ENCODE measurements at regions of chr2 and their contacts with region 1.

Region 1: GRCh38 chr2:202178342-202178958 is 59.9 kb downstream of the SUMO1 start:
- DNase-seq: peak; percentile 47 to 80 (median 59)
- H3K4me3 ChIP-seq: no peak overlapping the region
- H3K27ac ChIP-seq: no peak overlapping the region
- H3K4me1 ChIP-seq: no peaks in the 10 kb centered on the region
- H3K27me3 ChIP-seq: no peaks in the 10 kb centered on the region
- CTCF ChIP-seq: peak; percentile 69 to 87 (median 83)
- POLR2A ChIP-seq: no peak

Region 2: DNA sequence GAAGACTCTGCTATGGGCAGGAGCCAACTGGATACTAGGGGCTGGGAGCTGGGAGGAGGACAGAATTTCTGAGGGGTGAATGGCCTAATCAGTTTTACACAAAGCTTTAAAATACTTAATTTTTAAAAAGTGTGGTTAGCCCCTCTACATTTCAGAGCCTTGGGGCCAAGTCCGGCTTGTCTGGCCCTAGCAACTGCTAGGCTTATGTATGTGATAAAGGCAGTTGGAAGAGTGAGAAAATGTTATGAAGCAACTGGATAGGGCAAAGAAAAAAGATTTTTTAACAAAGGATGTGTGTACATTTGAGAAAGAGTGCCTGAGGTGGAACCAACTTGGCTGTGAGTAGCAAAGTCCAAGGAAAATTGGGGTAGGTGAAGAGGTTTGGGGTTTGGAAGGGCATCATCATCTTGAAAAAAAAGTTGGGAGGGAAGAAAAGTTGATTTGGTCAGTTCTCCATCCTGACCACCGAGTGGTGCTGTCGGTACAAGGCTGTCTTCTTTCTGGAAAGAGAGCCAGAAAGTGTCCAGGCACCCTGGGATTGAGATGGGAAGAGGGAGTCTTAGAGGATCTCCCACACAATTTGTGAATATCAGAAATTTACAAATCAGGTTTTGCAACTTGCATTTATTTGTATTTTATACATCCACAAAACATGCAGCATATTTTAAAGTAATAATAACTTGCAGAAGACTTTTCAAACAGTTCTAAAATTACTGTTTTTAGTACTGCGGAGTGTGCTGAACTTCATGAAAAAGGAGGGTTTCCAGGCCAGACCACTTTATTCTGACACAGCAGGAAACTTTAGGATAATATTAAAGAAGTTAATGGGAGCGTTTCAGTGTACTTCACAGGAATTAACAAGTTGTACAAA is 382.6 kb before region 1 on chr2:
- intact Hi-C with region 1: loop called (anchors 5 to 10 kb)
- DNase-seq: peak in 5 of 7 donors; percentile 22 to 43 (median 31)
- H3K4me3 ChIP-seq: no peak overlapping the region
- H3K27ac ChIP-seq: no peak overlapping the region
- H3K4me1 ChIP-seq: no peaks in the 10 kb centered on the region
- H3K27me3 ChIP-seq: no peaks in the 10 kb centered on the region
- CTCF ChIP-seq: peak; percentile 49 to 70 (median 66)
- POLR2A ChIP-seq: no peak

Region 3: DNA sequence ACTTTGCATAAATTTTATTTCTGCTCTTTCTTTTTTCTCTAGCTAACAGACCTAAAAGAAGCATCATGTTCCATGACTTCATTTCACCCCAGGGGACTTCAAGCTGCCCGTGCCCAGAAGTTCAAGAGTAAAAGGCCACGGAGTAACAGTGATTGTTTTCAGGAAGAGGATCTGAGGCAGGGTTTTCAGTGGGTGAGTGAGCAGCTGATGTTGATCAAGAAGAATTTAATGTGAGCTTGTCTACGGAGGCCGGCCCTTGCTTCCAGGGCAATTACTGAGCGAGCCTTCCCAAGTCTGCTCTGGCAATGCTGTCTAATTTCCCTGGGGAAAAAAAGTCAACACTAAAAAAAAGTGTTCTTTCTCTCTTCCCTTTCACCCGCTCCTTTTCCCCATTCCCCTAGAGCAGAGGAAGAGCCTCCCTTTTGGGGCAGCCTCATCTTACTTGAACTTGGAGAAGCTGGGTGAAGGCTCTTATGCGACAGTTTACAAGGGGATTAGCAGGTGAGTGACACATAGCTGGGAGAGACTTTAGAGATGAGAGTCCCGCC is 370.9 kb before region 1 on chr2:
- intact Hi-C with region 1: loop called in 1 of 2 experiments (anchors 10 kb)
- DNase-seq: peak in 6 of 7 donors; percentile 10 to 64 (median 32)
- H3K4me3 ChIP-seq: no peak overlapping the region
- H3K27ac ChIP-seq: peak overlapping the region in 2 of 5 donors; percentile 25 to 56
- H3K4me1 ChIP-seq: peaks cover 0 to 15% of the 10 kb centered on the region in 2 donors
- H3K27me3 ChIP-seq: no peaks in the 10 kb centered on the region
- CTCF ChIP-seq: no peak
- POLR2A ChIP-seq: no peak

Region 4: GRCh38 chr2:201860636-201861066 is 317.8 kb before region 1 on chr2:
- intact Hi-C with region 1: loop called (anchors 5 kb)
- DNase-seq: peak; percentile 47 to 76 (median 60)
- H3K4me3 ChIP-seq: no peak overlapping the region
- H3K27ac ChIP-seq: no peak overlapping the region
- H3K4me1 ChIP-seq: peaks cover 0 to 9% of the 10 kb centered on the region in 2 donors
- H3K27me3 ChIP-seq: no peaks in the 10 kb centered on the region
- CTCF ChIP-seq: peak; percentile 68 to 87 (median 82)
- POLR2A ChIP-seq: no peak

Region 5: DNA sequence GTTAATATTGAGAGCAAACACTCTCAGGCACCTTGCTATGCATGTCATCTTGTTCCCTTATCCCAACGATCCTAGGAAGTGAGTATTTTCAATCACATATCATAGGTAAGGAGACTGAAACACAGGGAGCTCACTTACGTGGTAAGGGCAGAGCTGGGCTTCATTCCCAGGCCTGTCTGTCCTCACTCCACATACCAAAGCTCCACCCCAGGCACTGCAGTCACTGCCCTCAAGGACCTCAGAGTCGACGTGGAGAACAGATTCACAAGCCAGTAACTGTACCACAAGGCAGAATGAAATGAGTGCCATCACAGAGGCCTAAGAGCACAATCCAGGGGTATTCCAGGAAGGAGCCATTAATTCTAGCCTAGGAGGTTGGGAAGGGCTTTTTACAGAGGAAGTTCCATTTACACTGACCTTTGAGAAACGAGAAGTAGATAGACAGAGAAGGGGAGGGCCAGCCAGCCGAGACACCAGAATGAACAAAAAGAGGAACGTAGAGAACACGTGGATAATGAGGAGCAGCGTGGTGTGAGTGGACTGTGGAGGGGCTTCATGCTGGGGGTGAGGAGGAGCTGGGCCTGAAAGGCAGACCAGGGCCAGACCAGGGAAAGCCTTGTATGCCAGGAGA is 56.8 kb before region 1 on chr2:
- intact Hi-C with region 1: no loop called
- DNase-seq: peak in 1 of 7 donors; percentile 25
- H3K4me3 ChIP-seq: no peak overlapping the region
- H3K27ac ChIP-seq: no peak overlapping the region
- H3K4me1 ChIP-seq: no peaks in the 10 kb centered on the region
- H3K27me3 ChIP-seq: no peaks in the 10 kb centered on the region
- CTCF ChIP-seq: no peak
- POLR2A ChIP-seq: no peak